Heart right ventricle (tissue), 16 donors: ENCODE measurements at regions of chr1 and their contacts with region 1.

Region 1: DNA sequence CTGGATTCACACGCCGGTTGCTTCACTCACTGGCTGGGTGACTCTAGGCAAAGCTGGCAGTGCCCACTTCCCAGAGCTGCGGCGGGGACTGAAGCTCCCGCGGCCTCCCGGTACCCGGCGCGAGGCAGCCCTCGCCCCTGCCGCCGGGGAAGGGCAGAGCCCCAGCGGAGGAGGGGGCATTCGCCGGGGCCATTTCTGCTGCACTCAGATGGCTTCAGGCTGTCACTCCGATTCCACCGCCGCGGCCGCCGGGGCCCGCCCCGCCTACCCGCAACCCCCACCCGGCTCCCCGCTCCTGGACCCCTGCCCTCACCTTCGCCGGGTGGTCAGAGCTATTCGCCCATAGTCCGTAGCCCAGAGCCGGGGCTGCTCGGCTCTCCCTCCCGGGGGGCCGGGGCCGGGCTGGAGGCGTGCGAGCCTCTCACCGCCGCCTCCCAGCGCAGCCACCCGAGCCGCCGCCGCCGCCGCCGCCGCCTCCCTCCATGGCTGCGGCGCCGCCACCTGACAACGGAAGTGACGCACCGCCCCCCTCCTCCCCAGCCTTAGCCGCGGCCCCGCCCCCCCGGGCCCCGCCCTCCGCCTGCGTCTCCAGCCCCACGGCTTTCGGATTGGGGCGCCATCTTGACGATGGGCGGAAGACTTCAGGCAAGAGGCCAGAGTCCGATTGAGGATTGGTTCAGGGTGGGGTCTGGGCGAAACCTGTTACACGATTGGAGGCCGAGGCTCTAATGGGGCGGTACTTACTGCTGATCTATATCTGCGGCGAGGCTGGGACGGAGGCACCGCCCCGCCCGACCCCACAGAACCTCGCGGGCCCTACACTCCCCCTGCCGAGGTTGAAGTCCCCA is at the start of gene STK40:
- DNase-seq: peak; percentile 98 to 99
- ATAC-seq: peak; percentile 88 to 97 (median 94)
- H3K4me3 ChIP-seq: peak within 1 kb of the TSS; percentile 83 to 100 (median 95)
- H3K27ac ChIP-seq: peak within 1 kb of the TSS; percentile 78 to 99 (median 96)
- H3K4me1 ChIP-seq: peaks cover 11 to 84% (median 73%) of the 10 kb centered on the region in 9 donors
- H3K27me3 ChIP-seq: no peaks in the 10 kb centered on the region
- CTCF ChIP-seq: peak in 1 of 9 donors; percentile 13
- total RNA-seq, gene STK40: 45.2 to 81.6 (median 60.8) TPM

Region 2: GRCh38 chr1:36297062-36297461 is 88.6 kb before region 1 on chr1:
- intact Hi-C with region 1: no loop called
- DNase-seq: no peak
- ATAC-seq: no peak
- H3K4me3 ChIP-seq: no peak overlapping the region
- H3K27ac ChIP-seq: no peak overlapping the region
- H3K4me1 ChIP-seq: peaks cover 0 to 24% (median 11%) of the 10 kb centered on the region in 9 donors
- H3K27me3 ChIP-seq: no peaks in the 10 kb centered on the region
- CTCF ChIP-seq: no peak

Region 3: DNA sequence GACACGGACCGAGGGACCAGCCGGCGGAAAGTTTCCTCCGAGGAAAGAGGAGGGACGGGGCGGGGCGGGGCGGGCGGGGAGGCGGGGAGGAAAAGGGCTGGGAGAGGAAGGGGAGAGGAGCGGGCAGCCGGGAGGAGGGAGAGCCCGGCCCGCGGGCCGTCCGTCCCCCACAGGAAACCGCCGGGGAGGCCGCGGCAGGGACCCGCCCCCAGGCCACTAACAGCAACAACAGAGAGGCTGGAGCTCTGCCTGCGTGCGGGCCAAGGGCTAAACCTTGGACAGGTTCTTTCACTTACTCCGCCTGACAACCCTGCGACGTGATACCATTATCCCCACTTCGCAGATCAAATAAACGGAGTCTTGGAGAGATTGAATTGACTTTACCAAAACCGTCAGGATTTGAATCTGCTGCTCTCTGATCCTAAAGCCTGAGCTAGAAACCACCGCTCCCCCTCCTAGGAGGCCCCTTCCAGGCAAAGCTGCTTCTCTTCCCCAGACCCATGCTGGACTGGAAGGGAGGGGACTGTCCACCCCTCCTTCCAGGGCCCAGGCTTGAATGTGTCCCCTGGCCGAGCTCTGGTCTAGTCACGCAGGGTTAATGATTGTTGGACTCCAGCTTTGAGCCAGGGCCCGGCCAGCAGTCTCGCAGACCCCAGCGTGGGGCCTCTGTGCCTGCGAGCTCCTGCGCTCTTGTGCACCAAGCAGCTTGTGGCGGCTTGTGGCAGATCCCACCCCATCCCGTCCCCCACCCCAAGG is 61.9 kb before region 1 on chr1 and contains the start of gene EVA1B:
- intact Hi-C with region 1: loop called in 1 of 10 experiments (anchors 5 kb)
- DNase-seq: peak; percentile 88 to 89
- ATAC-seq: peak; percentile 49 to 84 (median 76)
- H3K4me3 ChIP-seq: peak within 1 kb of the TSS; percentile 26 to 99 (median 87)
- H3K27ac ChIP-seq: peak within 1 kb of the TSS; percentile 81 to 97 (median 94)
- H3K4me1 ChIP-seq: peaks cover 12 to 53% (median 35%) of the 10 kb centered on the region in 9 donors
- H3K27me3 ChIP-seq: no peaks in the 10 kb centered on the region
- CTCF ChIP-seq: no peak
- total RNA-seq, gene EVA1B: 4.6 to 16.0 (median 6.8) TPM

Region 4: DNA sequence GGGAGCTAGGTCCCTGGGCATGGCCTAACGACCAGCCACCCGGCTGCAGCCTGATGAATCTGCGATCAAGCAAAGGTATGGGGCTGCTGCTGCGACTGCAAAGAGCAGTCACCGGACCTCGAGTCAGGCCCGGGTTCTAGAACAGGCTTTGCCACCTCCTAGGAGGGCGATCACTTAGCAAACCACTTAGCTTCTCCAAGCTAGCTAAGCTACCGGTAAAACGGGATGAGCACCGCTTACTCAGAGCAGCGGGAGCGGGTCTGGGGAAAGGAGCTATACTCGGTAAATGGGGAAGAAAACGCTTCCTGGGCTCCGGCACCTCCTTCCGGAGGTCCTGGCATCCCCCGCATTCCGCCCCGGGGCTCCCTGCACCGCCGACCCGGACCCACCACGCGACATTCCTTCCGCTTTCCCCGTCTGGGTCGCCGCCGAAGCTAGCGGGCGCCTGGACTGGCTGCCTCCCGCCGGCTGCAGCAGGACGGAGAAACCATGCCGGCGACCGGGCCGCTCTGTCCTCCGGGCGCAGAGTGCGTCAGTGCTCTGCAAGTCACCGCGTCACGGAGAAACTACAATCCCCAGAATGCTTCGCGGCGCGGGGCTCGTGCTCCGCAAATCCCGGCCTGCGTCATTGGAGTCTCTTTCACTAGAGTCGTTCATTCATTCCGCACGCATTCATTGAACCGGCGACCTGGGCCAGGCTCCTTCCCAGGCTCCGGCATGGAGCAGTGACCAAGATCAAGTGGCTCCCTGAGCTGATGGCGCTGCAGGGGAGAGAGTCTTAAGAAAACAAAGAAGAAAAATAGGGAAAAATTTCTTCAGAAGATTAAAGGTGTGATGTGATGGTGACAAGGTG is 12.0 kb after region 1 on chr1 and contains the start of gene LSM10:
- intact Hi-C with region 1: loop called in 1 of 10 experiments (anchors 1 kb)
- DNase-seq: peak; percentile 92 to 95
- ATAC-seq: peak; percentile 94 to 98 (median 96)
- H3K4me3 ChIP-seq: peak within 1 kb of the TSS; percentile 56 to 98 (median 76)
- H3K27ac ChIP-seq: peak within 1 kb of the TSS; percentile 46 to 97 (median 90)
- H3K4me1 ChIP-seq: peaks cover 5 to 45% (median 18%) of the 10 kb centered on the region in 9 donors
- H3K27me3 ChIP-seq: no peaks in the 10 kb centered on the region
- CTCF ChIP-seq: peak in 2 of 9 donors; percentile 9
- total RNA-seq, gene LSM10: 35.2 to 69.6 (median 44.7) TPM